ENCODE measurements at regions of chr6 and their contacts with region 1.

Region 1: GRCh38 chr6:108113557-108114519 is 39.3 kb upstream of the OSTM1 start:
- DNase-seq: peak in 1 of 2 donors; percentile 39
- ATAC-seq: peak in 7 of 8 donors; percentile 30 to 55 (median 46)
- H3K4me3 ChIP-seq: peak overlapping the region in 6 of 10 donors; percentile 13 to 57 (median 48)
- H3K27ac ChIP-seq: no peak overlapping the region
- H3K4me1 ChIP-seq: peaks cover 12 to 47% (median 41%) of the 10 kb centered on the region in 9 donors
- H3K27me3 ChIP-seq: peaks cover 16 to 98% (median 90%) of the 10 kb centered on the region in 7 donors
- CTCF ChIP-seq: peak in 8 of 9 donors; percentile 29 to 66 (median 54)

Region 2: DNA sequence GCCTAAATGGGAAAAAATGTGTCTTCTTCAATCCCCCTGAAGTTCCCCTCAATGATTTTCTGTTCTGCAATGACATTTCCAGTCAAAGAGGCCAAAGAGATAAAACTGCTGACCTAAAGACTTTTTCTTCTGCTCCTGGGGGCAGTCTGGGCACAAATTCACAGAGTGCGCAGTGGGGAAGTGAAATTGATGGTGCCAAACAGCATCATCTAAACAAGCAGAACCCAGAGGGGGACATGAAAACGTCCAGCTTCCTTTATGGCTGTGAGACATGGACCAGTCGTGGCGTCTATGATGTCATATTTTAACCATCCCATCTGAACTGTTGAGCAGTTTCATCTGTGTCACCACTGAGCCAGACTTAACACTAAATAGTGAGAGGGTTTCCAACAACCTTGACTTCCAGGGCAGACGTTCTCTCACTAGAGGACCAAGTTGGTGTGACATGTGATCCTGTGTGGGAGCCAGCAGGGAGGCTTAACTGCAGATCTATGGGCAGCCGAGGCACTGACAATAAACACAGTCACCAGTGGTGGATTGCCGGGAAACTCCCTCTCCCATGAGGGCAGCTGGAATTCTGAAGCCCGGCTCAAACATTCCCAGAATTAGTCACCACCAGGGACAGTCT is 302.1 kb before region 1 on chr6:
- intact Hi-C with region 1: no loop called
- DNase-seq: no peak
- ATAC-seq: peak in 3 of 8 donors; percentile 19 to 30 (median 29)
- H3K4me3 ChIP-seq: no peak overlapping the region
- H3K27ac ChIP-seq: no peak overlapping the region
- H3K4me1 ChIP-seq: peaks cover 0 to 9% (median 0%) of the 10 kb centered on the region in 9 donors
- H3K27me3 ChIP-seq: peaks cover 0 to 31% (median 0%) of the 10 kb centered on the region in 7 donors
- CTCF ChIP-seq: no peak

Region 3: GRCh38 chr6:108492131-108492766 is 378.4 kb after region 1 on chr6:
- intact Hi-C with region 1: loop called in 9 of 10 experiments (anchors 2 to 10 kb)
- DNase-seq: peak in 1 of 2 donors; percentile 6
- ATAC-seq: peak in 3 of 8 donors; percentile 35 to 72 (median 67)
- H3K4me3 ChIP-seq: no peak overlapping the region
- H3K27ac ChIP-seq: no peak overlapping the region
- H3K4me1 ChIP-seq: peaks cover 0 to 7% (median 0%) of the 10 kb centered on the region in 9 donors
- H3K27me3 ChIP-seq: no peaks in the 10 kb centered on the region
- CTCF ChIP-seq: peak; percentile 20 to 85 (median 66)

Region 4: GRCh38 chr6:108521616-108522107 is 407.8 kb after region 1 on chr6:
- intact Hi-C with region 1: loop called (anchors 1 to 10 kb)
- DNase-seq: no peak
- ATAC-seq: no peak
- H3K4me3 ChIP-seq: no peak overlapping the region
- H3K27ac ChIP-seq: no peak overlapping the region
- H3K4me1 ChIP-seq: no peaks in the 10 kb centered on the region
- H3K27me3 ChIP-seq: no peaks in the 10 kb centered on the region
- CTCF ChIP-seq: no peak